WTC11 (cell line): ENCODE measurements at regions of chr15 and their contacts with region 1.

Region 1: DNA sequence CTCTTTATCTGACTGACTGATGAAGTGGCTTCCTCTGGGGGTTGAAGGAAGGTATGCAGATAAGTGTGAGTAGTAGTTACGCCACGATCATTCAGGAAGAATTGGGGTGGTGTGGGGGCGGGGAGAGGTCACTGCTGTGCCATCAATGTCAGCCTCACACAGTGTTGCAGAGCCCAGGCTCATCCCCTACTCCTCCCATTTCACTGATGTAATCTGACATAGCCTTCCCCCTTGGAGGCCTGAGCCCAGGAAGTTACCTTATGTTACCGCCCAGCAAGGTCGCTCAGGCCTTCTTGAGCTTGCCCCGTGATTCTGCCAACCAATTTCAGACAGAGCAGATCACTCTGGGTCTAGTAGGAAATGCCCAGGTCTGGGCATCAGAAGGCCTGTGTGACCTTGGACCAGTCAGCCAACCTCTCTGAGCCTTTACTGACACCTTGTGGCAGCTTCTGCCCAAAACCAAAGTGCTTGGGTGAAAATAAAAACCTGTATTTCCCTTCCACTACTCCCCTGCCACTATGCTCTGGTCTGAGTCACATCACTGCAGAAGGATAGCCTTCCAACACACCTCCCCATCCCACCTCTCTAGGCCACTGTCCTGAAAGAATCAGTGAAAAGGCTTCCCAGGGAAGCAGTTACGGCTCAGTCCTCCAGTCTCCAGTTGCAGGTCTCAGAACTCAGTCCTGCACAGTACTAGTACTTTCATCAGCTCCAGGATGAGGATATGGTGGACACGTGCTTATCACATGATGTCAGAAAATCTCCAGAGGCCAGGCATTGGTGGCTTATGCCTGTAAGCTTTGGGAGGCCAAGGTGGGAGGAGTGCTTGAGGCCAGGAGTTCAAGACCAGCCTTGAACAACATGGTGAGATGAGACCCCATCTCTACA is 28.1 kb upstream of the INSYN1 start:
- DNase-seq: no peak
- ATAC-seq: peak; percentile 75
- H3K4me3 Mint-ChIP-seq: no peak overlapping the region
- H3K27ac Mint-ChIP-seq: no peak overlapping the region
- H3K4me1 Mint-ChIP-seq: peaks cover 44% of the 10 kb centered on the region
- H3K27me3 Mint-ChIP-seq: no peaks in the 10 kb centered on the region; the same call in 1 of the 2 replicates
- CTCF ChIP-seq: 0 out of 2 replicates have a peak, but pooled peaks have one; percentile 29

Region 2: GRCh38 chr15:73712088-73712487 is 69.2 kb before region 1 on chr15:
- CTCF ChIA-PET with region 1: interaction called, 10 read pairs
- POLR2A ChIA-PET with region 1: no interaction called
- DNase-seq: peak; percentile 48
- ATAC-seq: peak; percentile 68
- H3K4me3 Mint-ChIP-seq: no peak overlapping the region
- H3K27ac Mint-ChIP-seq: peak overlapping the region; percentile 45; the same call in 1 of the 2 replicates
- H3K4me1 Mint-ChIP-seq: no peaks in the 10 kb centered on the region
- H3K27me3 Mint-ChIP-seq: no peaks in the 10 kb centered on the region
- CTCF ChIP-seq: no peak

Region 3: DNA sequence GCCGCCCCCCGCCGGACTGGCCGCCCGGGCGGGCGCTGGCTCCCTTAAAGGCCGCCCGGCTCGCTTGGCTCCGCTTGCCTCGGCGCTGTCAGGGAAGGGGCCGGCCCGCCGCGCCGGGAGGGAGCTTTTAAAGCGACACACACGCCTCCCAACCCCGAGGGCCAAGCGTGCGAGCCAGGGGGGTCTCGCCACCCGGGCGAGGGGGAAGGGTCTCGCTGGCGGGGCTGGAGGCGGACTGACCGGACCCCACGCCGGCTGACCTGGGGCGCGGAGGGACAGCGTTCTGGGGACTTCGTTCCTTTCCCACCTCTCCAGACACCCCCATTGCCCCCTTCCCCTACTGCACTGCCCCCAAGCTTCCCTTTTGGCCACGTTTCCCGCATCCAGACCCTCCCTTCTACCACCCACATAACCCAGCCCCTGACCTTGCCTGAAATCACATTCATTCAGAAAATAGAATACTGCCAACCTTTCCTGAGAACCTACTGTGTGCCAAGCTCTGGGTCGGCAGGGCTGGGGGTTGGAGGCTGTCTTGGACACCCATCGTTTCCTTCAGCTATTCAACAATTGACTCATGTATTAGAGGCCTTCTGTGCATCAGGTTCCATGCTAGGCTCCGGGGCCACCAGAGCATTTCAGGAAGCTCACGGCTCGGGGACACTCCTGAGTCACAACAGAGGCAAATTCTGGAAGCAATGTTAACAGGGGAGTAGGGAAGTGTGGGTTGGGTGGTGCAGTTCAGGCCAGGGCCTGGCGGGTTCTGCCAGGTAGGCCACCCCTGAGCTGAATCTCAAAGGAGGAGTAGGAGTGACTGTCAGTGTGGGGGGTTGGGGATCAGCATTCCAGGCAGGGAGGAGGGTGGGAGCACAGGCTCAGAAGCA is 27.8 kb before region 1 on chr15 and contains the start of gene INSYN1:
- CTCF ChIA-PET with region 1: interaction called, 14 read pairs
- POLR2A ChIA-PET with region 1: interaction called, 6 read pairs
- DNase-seq: peak; percentile 42
- ATAC-seq: peak; percentile 68
- H3K4me3 Mint-ChIP-seq: peak within 1 kb of the TSS; percentile 69
- H3K27ac Mint-ChIP-seq: no peak within 1 kb of the TSS
- H3K4me1 Mint-ChIP-seq: peaks cover 27% of the 10 kb centered on the region
- H3K27me3 Mint-ChIP-seq: peaks cover 26% of the 10 kb centered on the region
- CTCF ChIP-seq: no peak
- total RNA-seq, gene INSYN1: 9.0 to 11.9 TPM (median 9.8 TPM) in 3 replicates

Region 4: DNA sequence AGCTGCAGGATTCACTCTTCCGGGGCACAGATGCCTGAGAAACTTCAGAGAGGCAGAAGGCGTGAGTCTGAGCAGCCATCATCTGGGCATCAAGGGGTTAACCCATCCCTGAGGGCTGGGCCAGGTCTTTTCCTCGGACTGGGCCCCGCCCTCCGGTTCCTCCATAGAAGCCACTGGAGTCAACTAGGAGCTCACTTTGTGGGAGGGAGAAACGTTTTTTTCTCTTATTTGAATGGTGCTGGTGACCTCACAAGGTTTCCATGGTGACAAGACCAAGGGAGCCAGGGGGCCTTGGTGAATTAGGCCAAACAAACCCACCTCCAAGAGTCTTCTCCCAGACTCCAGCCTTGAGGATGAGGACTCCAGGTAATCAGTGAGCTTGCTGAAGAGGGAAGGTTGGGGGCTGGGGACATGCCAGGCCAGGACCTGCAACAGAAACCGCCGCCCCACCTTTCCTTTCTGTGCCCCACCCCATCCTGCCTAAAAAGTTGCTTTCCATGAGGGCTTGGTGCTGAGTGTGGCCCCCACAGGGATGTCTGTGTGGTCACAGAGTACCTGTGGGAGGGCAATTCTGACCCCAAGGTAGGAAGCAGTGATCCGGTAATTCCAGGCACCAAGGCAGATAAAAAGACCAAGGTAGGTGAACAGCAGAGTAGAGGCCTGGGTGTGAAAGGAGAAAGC is 13.3 kb before region 1 on chr15:
- CTCF ChIA-PET with region 1: interaction called, 20 read pairs
- POLR2A ChIA-PET with region 1: interaction called, 4 read pairs
- DNase-seq: peak; percentile 57
- ATAC-seq: peak; percentile 77
- H3K4me3 Mint-ChIP-seq: no peak overlapping the region; the same call in 1 of the 2 replicates
- H3K27ac Mint-ChIP-seq: no peak overlapping the region
- H3K4me1 Mint-ChIP-seq: peaks cover 28% of the 10 kb centered on the region
- H3K27me3 Mint-ChIP-seq: no peaks in the 10 kb centered on the region; the same call in 1 of the 2 replicates
- CTCF ChIP-seq: no peak